ENCODE measurements at regions of chr9 and their contacts with region 1.

Region 1: GRCh38 chr9:98791147-98792095 is 4.9 kb downstream of the ANKS6 start:
- DNase-seq: peak; percentile 75 to 84 (median 80)
- H3K4me3 ChIP-seq: no peak overlapping the region
- H3K4me3 Mint-ChIP-seq: no peak overlapping the region
- H3K27ac ChIP-seq: no peak overlapping the region
- H3K27ac Mint-ChIP-seq: peak overlapping the region in 3 of 7 donors; percentile 26 to 83 (median 27)
- H3K4me1 ChIP-seq: peaks cover 5 to 13% of the 10 kb centered on the region in 2 donors
- H3K4me1 Mint-ChIP-seq: peaks cover 14% of the 10 kb centered on the region
- H3K27me3 ChIP-seq: peaks cover 5 to 13% of the 10 kb centered on the region in 2 donors
- H3K27me3 Mint-ChIP-seq: peaks cover 12 to 17% (median 15%) of the 10 kb centered on the region in 3 donors
- CTCF ChIP-seq: peak; percentile 97

Region 2: GRCh38 chr9:98315551-98316060 is 475.8 kb before region 1 on chr9:
- intact Hi-C with region 1: loop called (anchors 5 kb)
- DNase-seq: peak; percentile 44 to 66 (median 60)
- H3K4me3 ChIP-seq: no peak overlapping the region
- H3K4me3 Mint-ChIP-seq: no peak overlapping the region
- H3K27ac ChIP-seq: no peak overlapping the region
- H3K27ac Mint-ChIP-seq: no peak overlapping the region
- H3K4me1 ChIP-seq: peaks cover 13 to 19% of the 10 kb centered on the region in 2 donors
- H3K4me1 Mint-ChIP-seq: peaks cover 29% of the 10 kb centered on the region
- H3K27me3 ChIP-seq: no peaks in the 10 kb centered on the region
- H3K27me3 Mint-ChIP-seq: peaks cover 1 to 6% (median 4%) of the 10 kb centered on the region in 3 donors
- CTCF ChIP-seq: peak; percentile 96

Region 3: GRCh38 chr9:98536542-98537173 is 254.8 kb before region 1 on chr9:
- intact Hi-C with region 1: loop called (anchors 2 to 5 kb)
- DNase-seq: peak; percentile 19 to 43 (median 37)
- H3K4me3 ChIP-seq: no peak overlapping the region
- H3K4me3 Mint-ChIP-seq: no peak overlapping the region
- H3K27ac ChIP-seq: no peak overlapping the region
- H3K27ac Mint-ChIP-seq: no peak overlapping the region
- H3K4me1 ChIP-seq: no peaks in the 10 kb centered on the region
- H3K4me1 Mint-ChIP-seq: peaks cover 3% of the 10 kb centered on the region
- H3K27me3 ChIP-seq: no peaks in the 10 kb centered on the region
- H3K27me3 Mint-ChIP-seq: peaks cover 6 to 13% (median 8%) of the 10 kb centered on the region in 3 donors
- CTCF ChIP-seq: peak; percentile 68

Measured in CD14-positive monocyte (primary cell).